Mammary epithelial cell (primary cell): ENCODE measurements at regions of chr5 and their contacts with region 1.

Region 1: GRCh38 chr5:114449860-114450421 is 88.1 kb downstream of the KCNN2 start:
- DNase-seq: peak; percentile 29
- H3K4me3 ChIP-seq: no peak overlapping the region
- H3K27ac ChIP-seq: no peak overlapping the region
- H3K4me1 ChIP-seq: no peaks in the 10 kb centered on the region
- H3K27me3 ChIP-seq: no peaks in the 10 kb centered on the region
- CTCF ChIP-seq: peak; percentile 82 to 92

Region 2: DNA sequence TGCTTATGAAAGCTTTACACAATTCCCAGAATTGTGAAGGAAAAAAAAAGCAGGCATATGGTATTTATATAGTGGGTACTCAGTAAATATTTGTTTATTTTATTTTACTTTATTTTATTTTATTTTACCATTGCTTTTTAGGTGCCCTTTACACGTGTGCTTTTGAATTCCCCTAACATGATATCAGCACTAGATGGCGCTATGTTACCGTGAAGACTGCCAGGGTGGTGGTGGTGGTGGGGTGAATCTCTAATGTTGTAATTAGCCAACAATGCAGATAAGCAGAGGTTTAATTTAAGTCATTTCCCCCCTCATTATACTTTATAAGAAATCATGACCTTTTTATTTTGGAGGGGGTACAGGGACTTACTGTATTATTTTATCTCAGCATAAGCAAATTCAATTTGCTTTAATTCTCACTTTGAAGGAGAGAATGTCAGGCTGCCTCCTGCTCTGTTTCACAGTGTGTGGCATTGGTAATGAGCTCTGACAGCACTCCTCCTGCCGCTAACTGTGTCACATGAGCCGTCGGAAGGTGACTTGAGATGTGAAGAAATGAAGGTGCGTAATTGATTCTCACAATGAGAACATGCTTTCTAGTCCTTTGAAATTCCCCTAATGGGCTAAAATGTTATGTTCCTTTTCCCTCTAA is 770.9 kb before region 1 on chr5:
- CTCF ChIA-PET with region 1: no interaction called
- dilution Hi-C with region 1: no loop called
- in situ Hi-C with region 1: loop called in 1 of 2 experiments (anchors 25 kb)
- intact Hi-C with region 1: loop called (anchors 1 kb)
- DNase-seq: peak; percentile 36
- H3K4me3 ChIP-seq: no peak overlapping the region
- H3K27ac ChIP-seq: no peak overlapping the region
- H3K4me1 ChIP-seq: no peaks in the 10 kb centered on the region
- H3K27me3 ChIP-seq: no peaks in the 10 kb centered on the region
- CTCF ChIP-seq: peak; percentile 79 to 82

Region 3: DNA sequence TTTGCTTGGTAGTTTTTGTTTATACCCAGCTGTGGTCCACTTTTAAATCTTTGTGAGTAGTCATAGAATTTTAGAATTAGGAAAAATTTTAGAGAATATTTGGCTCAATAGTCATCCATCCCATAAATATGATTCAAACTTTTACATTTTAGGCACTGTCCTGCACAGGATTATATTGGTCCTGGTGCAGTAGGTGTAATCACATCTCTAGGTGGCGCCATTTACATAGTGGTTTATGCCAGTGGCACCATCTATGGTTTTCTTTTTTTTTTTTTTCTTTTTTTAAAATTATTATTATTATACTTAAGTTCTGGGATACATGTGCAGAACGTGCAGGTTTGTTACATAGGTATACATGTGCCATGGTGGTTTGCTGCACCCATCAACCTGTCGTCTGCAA is 348.8 kb before region 1 on chr5:
- CTCF ChIA-PET with region 1: interaction called, 12 read pairs
- dilution Hi-C with region 1: no loop called
- in situ Hi-C with region 1: loop called (anchors 10 to 25 kb)
- intact Hi-C with region 1: loop called (anchors 1 kb)
- DNase-seq: peak; percentile 17
- H3K4me3 ChIP-seq: no peak overlapping the region
- H3K27ac ChIP-seq: no peak overlapping the region
- H3K4me1 ChIP-seq: no peaks in the 10 kb centered on the region
- H3K27me3 ChIP-seq: no peaks in the 10 kb centered on the region
- CTCF ChIP-seq: peak; percentile 75 to 76

Region 4: DNA sequence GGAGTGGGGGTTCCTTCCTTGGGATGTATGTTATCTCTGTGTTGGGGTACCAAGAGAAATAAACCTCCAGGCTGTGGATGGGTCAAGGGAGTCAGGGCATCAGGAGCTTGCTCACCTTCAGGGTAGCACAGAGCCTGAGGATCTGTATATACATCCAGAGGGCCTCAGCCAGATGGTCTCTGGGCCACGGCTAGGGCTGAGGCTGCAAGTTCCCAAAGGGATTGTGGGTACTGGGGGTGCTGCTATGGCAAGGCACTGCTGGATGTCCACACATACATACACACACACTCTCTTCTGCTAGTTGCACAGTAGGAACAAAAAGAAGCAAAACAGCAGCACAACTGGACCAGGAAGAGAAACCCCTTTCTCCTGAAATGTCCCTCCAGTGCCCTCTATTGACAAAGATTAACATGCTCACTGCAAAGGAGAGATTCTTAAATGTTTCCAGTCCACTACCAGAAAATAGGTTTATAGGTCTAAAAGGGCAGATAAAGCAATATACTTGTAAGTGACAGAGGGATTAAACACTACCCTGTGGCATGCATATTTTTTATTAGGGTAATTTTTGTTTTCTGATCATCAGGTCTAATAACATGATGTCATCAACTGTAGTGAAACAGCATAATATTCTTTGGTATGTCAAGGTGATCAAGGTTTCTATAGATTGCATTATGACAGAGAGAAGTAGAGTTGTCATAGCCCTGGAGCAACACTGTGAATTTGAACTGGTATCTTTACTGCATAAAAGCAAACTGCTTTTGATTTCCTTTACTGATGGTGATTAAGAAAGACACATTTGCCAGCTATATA is 144.3 kb before region 1 on chr5:
- CTCF ChIA-PET with region 1: no interaction called
- dilution Hi-C with region 1: no loop called
- in situ Hi-C with region 1: no loop called
- intact Hi-C with region 1: loop called (anchors 2 kb)
- DNase-seq: peak; percentile 6
- H3K4me3 ChIP-seq: no peak overlapping the region
- H3K27ac ChIP-seq: no peak overlapping the region
- H3K4me1 ChIP-seq: no peaks in the 10 kb centered on the region
- H3K27me3 ChIP-seq: peaks cover under 1% of the 10 kb centered on the region
- CTCF ChIP-seq: peak; percentile 40 to 54

Region 5: GRCh38 chr5:114544561-114544960 is 94.6 kb after region 1 on chr5:
- CTCF ChIA-PET with region 1: no interaction called
- dilution Hi-C with region 1: no loop called
- in situ Hi-C with region 1: no loop called
- intact Hi-C with region 1: no loop called
- DNase-seq: no peak
- H3K4me3 ChIP-seq: no peak overlapping the region
- H3K27ac ChIP-seq: no peak overlapping the region
- H3K4me1 ChIP-seq: no peaks in the 10 kb centered on the region
- H3K27me3 ChIP-seq: no peaks in the 10 kb centered on the region
- CTCF ChIP-seq: no peak

Region 6: GRCh38 chr5:115246361-115246991 is 796.5 kb after region 1 on chr5:
- CTCF ChIA-PET with region 1: no interaction called
- dilution Hi-C with region 1: no loop called
- in situ Hi-C with region 1: no loop called
- intact Hi-C with region 1: loop called (anchors 10 kb)
- DNase-seq: peak; percentile 26
- H3K4me3 ChIP-seq: no peak overlapping the region
- H3K27ac ChIP-seq: no peak overlapping the region
- H3K4me1 ChIP-seq: peaks cover 7% of the 10 kb centered on the region
- H3K27me3 ChIP-seq: no peaks in the 10 kb centered on the region
- CTCF ChIP-seq: peak; percentile 62 to 70